Psoas muscle (tissue), 8 donors: ENCODE measurements at regions of chr10 and their contacts with region 1.

Region 1: GRCh38 chr10:103618575-103619423 is 125.3 kb downstream of the NEURL1 start:
- DNase-seq: peak; percentile 75 to 86
- ATAC-seq: peak in 2 of 4 donors; percentile 27 to 44
- H3K4me3 ChIP-seq: no peak overlapping the region
- H3K27ac ChIP-seq: peak overlapping the region; percentile 50
- H3K4me1 ChIP-seq: peaks cover 82% of the 10 kb centered on the region
- H3K27me3 ChIP-seq: no peaks in the 10 kb centered on the region
- CTCF ChIP-seq: no peak

Region 2: GRCh38 chr10:103659674-103660363 is 41.0 kb after region 1 on chr10:
- intact Hi-C with region 1: loop called in 1 of 2 experiments (anchors 5 kb)
- DNase-seq: peak in 1 of 2 donors; percentile 54
- ATAC-seq: peak; percentile 32 to 51 (median 40)
- H3K4me3 ChIP-seq: peak overlapping the region; percentile 70
- H3K27ac ChIP-seq: peak overlapping the region; percentile 86
- H3K4me1 ChIP-seq: peaks cover 33% of the 10 kb centered on the region
- H3K27me3 ChIP-seq: no peaks in the 10 kb centered on the region
- CTCF ChIP-seq: no peak

Region 3: GRCh38 chr10:104353325-104354048 is 734.7 kb after region 1 on chr10 and contains the start of gene CFAP58:
- intact Hi-C with region 1: no loop called
- DNase-seq: peak; percentile 89 to 94
- ATAC-seq: peak; percentile 91 to 94 (median 93)
- H3K4me3 ChIP-seq: peak within 1 kb of the TSS; percentile 68
- H3K27ac ChIP-seq: peak within 1 kb of the TSS; percentile 17
- H3K4me1 ChIP-seq: peaks cover 17% of the 10 kb centered on the region
- H3K27me3 ChIP-seq: peaks cover 0 to 6% (median 0%) of the 10 kb centered on the region in 3 donors
- CTCF ChIP-seq: peak; percentile 65
- total RNA-seq, gene CFAP58: 0.21 to 0.74 (median 0.56) TPM